Activated CD4-positive, alpha-beta memory T cell treated with anti-CD3 and anti-CD28 coated beads for 36 hours (primary cell): ENCODE measurements at regions of chr2 and their contacts with region 1.

Region 1: GRCh38 chr2:73071360-73072133 is at the start of gene SFXN5:
- DNase-seq: peak; percentile 97
- H3K4me3 Mint-ChIP-seq: peak within 1 kb of the TSS; percentile 80
- H3K27ac Mint-ChIP-seq: peak within 1 kb of the TSS; percentile 71
- H3K4me1 Mint-ChIP-seq: peaks cover 23% of the 10 kb centered on the region
- H3K27me3 Mint-ChIP-seq: no peaks in the 10 kb centered on the region
- total RNA-seq, gene SFXN5: 4.5 to 7.6 TPM

Region 2: DNA sequence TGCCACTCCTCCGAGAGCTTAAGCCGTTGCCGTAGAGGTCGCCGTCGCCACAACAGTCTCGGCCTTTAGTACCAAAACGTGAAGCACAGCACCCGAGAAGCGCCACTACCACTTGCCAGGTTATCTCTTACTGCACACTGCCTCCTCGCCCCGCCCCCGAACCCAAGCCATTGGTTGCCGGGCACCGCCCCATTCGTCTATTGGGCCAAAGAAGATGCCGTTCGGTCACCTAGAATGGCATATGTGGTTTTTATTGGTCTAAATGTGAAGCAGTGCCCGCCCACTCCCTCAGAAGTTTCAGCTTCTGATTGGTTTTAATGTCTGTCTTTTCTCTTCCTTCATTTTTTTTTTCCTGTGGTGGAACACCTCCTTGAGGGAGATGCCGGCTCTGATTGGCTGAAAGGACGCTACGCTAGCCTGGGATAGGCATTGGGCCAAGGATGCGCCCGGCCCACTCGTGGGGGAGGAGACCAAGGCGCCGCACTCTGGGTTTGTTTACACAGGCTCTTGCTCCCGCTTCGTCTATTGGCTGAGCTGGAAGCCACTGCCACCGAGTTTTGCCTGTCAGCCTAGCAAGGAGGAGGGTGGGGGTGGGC is 1844.5 kb before region 1 on chr2 and contains the start of gene PAIP2B:
- CTCF ChIA-PET with region 1: no interaction called
- POLR2A ChIA-PET with region 1: no interaction called
- intact Hi-C with region 1: loop called (anchors 5 kb)
- DNase-seq: peak; percentile 99
- H3K4me3 Mint-ChIP-seq: peak within 1 kb of the TSS; percentile 97
- H3K27ac Mint-ChIP-seq: peak within 1 kb of the TSS; percentile 82
- H3K4me1 Mint-ChIP-seq: peaks cover 10% of the 10 kb centered on the region
- H3K27me3 Mint-ChIP-seq: peaks cover 2% of the 10 kb centered on the region
- total RNA-seq, gene PAIP2B: 2.2 TPM

Region 3: GRCh38 chr2:72630767-72631166 is 440.8 kb before region 1 on chr2:
- CTCF ChIA-PET with region 1: no interaction called
- POLR2A ChIA-PET with region 1: no interaction called
- intact Hi-C with region 1: no loop called
- DNase-seq: no peak
- H3K4me3 Mint-ChIP-seq: no peak overlapping the region
- H3K27ac Mint-ChIP-seq: no peak overlapping the region
- H3K4me1 Mint-ChIP-seq: no peaks in the 10 kb centered on the region
- H3K27me3 Mint-ChIP-seq: no peaks in the 10 kb centered on the region

Region 4: DNA sequence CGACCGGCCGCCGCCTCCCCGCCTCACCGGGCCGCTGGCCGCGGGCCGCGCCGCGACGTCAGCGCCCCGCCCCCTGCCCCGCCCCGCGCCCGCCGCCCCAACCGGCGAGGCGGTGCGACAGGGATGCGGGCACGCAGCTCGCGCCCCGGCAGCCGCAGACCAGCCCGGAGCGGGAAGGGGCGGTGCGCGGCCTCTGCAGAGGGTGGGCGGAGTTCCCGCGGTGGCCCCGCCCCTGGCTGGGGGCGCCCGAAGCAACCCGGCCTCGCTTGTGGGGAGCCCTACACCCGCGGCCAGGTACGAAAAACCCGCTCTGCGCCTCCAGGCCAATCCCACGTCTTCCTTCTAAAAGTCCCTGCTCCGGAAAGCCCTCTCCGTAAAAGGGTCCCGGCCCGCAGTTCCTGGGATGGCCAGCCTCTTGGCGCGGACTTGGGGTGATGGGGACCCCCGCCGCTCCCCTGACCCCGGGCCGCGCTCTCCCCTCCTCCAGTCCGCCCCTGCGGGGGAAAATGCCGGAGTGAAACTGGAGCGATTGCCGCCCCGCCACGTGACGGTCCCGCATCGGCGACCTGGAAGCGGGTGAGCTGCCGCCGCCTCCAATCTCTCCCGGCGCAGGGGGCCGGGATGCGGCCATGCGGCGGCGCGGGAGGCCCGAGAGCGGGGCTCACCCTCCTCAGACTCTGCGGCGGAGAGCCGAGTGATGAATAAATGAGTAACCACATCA is 41.5 kb after region 1 on chr2 and contains the start of gene RAB11FIP5:
- CTCF ChIA-PET with region 1: interaction called, 3 read pairs
- POLR2A ChIA-PET with region 1: interaction called, 8 read pairs
- intact Hi-C with region 1: loop called (anchors 1 kb)
- DNase-seq: peak; percentile 83
- H3K4me3 Mint-ChIP-seq: peak within 1 kb of the TSS; percentile 81
- H3K27ac Mint-ChIP-seq: no peak within 1 kb of the TSS
- H3K4me1 Mint-ChIP-seq: peaks cover 21% of the 10 kb centered on the region
- H3K27me3 Mint-ChIP-seq: no peaks in the 10 kb centered on the region
- total RNA-seq, gene RAB11FIP5: 11.1 to 11.2 TPM

Region 5: DNA sequence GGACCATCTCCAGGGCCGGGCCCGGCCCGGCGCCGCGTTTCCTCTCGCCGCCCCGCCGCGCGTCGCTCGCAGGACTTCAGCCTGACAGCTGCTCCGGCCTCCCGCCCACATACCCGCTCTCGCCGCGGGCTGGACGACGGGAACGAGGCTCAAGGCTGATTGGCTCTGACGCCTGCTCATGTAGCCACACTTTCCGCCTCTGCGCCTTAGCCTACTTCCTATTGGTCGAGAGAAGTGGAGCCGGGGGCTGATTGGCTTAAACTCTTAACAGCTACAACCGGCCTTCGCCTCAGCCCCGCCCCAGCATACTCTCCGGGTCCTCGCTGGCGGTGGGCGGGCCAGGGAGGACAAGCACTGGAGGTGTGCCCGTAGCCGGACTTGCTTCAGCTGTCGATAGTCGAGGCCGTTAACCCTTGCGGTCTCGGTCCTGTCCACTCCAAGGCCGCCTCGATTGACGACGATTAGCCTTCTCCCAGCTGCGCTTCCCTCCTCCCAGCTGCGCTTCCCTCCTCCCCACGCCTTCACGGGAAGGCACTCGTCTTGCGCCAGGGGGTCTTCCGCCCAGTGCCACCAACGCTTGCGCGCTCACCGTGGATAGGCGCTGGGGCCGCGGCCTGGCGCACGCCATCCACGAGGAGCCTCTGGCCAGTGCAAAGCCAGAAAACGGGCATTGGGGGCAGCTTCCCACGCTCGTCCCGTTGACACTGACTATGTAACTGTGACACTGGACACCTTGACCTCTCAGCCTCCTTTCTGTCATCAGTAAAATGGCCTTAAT is 161.8 kb after region 1 on chr2 and contains the start of gene PRADC1:
- CTCF ChIA-PET with region 1: no interaction called
- POLR2A ChIA-PET with region 1: no interaction called
- intact Hi-C with region 1: loop called (anchors 1 kb)
- DNase-seq: peak; percentile 97
- H3K4me3 Mint-ChIP-seq: peak within 1 kb of the TSS; percentile 87
- H3K27ac Mint-ChIP-seq: peak within 1 kb of the TSS; percentile 80
- H3K4me1 Mint-ChIP-seq: peaks cover 29% of the 10 kb centered on the region
- H3K27me3 Mint-ChIP-seq: peaks cover 1% of the 10 kb centered on the region
- total RNA-seq, gene PRADC1: 12.9 to 13.6 TPM

Region 6: GRCh38 chr2:73736855-73737779 is 665.6 kb after region 1 on chr2 and contains the start of gene TPRKB:
- CTCF ChIA-PET with region 1: no interaction called
- POLR2A ChIA-PET with region 1: no interaction called
- intact Hi-C with region 1: loop called (anchors 5 kb)
- DNase-seq: peak; percentile 98
- H3K4me3 Mint-ChIP-seq: peak within 1 kb of the TSS; percentile 93
- H3K27ac Mint-ChIP-seq: peak within 1 kb of the TSS; percentile 75
- H3K4me1 Mint-ChIP-seq: peaks cover 20% of the 10 kb centered on the region
- H3K27me3 Mint-ChIP-seq: no peaks in the 10 kb centered on the region
- total RNA-seq, gene TPRKB: 33.2 to 34.6 TPM